HepG2 (cell line): ENCODE measurements at regions of chr9 and their contacts with region 1.

Region 1: GRCh38 chr9:75027187-75028107 is 646 bp downstream of the CARNMT1 start:
- DNase-seq: peak; percentile 30
- ATAC-seq: peak; percentile 83
- H3K4me3 ChIP-seq: peak overlapping the region; percentile 57 to 79 (median 69)
- H3K27ac ChIP-seq: peak overlapping the region; percentile 94
- H3K4me1 ChIP-seq: peaks cover 38% of the 10 kb centered on the region
- H3K27me3 ChIP-seq: no peaks in the 10 kb centered on the region; a peak in 1 of 5 replicates
- CTCF ChIP-seq: no peak
- EP300 ChIP-seq: no peak
- POLR2A ChIP-seq: no peak
- RAD21 ChIP-seq: no peak

Region 2: DNA sequence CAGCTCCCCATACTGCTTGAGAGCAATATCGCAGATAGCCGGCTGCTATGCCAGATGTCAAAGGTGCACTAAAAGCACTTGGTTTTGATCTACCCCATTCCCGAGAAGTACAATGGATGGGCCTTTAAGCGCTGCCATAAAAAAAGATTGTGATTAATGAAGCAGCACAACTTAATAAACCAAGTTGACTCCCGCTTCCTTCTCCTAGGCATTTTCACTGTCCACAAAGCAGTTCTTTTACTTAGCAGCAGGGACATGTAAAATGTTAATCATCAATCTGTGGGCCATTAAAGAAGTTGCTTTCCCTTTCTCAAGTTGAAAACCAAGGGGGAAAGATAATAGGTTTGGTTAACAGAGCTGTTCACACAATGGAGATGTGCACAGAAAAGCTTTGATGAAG is 316.1 kb before region 1 on chr9:
- CTCF ChIA-PET with region 1: no interaction called
- POLR2A ChIA-PET with region 1: no interaction called
- in situ Hi-C with region 1: no loop called
- intact Hi-C with region 1: no loop called
- DNase-seq: no peak
- ATAC-seq: no peak
- H3K4me3 ChIP-seq: no peak overlapping the region
- H3K27ac ChIP-seq: no peak overlapping the region
- H3K4me1 ChIP-seq: no peaks in the 10 kb centered on the region
- H3K27me3 ChIP-seq: no peaks in the 10 kb centered on the region
- CTCF ChIP-seq: no peak
- EP300 ChIP-seq: no peak
- POLR2A ChIP-seq: no peak
- RAD21 ChIP-seq: no peak

Region 3: DNA sequence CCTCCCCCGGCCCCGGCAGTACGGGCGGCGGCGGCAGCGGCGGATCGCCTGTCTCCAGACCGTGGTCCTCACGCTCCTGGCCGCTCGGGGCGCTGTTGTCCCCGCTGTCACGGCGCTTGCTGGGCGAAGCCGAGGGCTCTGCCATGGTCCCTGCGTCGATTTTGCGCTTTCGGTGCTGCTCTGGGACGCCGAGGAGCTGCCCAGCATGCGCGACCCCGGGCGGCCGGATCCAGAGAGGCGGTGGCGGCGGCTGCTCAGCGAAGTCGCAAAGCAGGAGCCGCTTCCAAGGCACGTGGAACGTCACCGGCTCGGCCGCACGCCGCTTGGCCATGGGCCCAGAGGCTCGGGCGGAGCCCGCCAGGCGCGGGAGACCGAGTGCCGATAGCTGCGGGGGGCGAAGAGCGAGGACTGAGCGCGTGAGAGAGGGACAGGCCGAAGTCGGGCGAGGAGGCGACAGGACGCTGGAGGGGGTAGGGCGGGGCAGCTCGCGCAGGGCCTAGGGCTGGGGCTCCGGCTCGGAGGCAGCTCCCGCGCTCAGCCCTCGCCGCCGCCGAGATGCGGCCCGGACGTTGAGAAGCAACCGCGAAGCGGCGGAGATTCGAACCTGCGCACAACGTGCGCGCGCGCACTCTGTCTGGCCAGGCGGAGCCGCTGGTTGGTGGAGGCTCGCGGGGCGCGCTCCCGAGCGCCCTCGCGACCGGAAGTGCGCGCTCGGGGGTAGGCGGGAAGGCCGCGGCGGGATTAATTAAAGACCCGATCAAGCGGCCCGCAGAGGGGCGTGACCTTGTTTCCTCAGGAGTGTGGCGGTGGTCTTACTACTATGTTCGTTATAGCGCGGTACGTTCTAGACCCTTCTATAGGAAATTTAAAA is 74.9 kb before region 1 on chr9 and contains the start of gene C9orf40:
- CTCF ChIA-PET with region 1: no interaction called
- POLR2A ChIA-PET with region 1: interaction called, 18 read pairs
- in situ Hi-C with region 1: no loop called
- intact Hi-C with region 1: loop called (anchors 5 kb)
- DNase-seq: peak; percentile 70
- ATAC-seq: peak; percentile 96
- H3K4me3 ChIP-seq: peak within 1 kb of the TSS; percentile 89 to 97 (median 89)
- H3K27ac ChIP-seq: peak within 1 kb of the TSS; percentile 99
- H3K4me1 ChIP-seq: peaks cover 33% of the 10 kb centered on the region
- H3K27me3 ChIP-seq: no peaks in the 10 kb centered on the region; a peak in 1 of 5 replicates
- CTCF ChIP-seq: peak; percentile 91
- EP300 ChIP-seq: no peak
- POLR2A ChIP-seq: peak; percentile 42 to 67; a peak in 3 of 4 replicates
- RAD21 ChIP-seq: peak; percentile 63
- total RNA-seq, gene C9orf40: 13.5 and 16.5 TPM in 2 replicates

Region 4: DNA sequence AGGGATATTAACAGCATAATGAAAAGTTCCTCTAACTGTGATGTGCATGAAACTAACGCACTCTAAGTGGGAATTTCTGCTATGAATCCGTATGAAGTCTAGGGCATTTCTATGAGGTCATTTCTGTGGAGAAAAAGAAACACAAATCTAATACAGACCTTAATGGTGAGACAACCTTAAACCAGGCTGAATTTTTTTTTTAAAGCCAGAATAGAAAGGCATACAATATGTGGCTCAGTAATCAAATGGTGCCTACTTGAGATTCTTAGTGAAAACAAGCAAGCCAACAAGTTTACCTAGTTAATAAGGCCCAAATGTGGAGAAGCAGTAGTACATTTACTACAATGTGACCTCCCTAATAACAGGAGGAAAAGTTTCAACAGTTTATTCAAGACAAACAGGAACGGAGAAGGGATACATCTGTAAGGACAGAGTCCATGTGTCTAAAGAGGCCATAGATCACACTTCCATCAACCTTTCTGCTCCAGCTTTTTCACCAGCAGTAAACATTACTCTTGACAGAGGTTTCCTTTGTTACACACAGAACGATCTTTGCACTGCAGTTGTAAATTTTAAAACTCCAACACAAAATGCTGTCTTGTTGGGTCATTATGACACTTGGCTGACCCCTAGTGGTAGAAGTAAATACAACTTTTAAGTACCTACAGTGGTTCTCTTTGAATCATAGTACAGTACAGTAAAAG is 25.6 kb before region 1 on chr9:
- CTCF ChIA-PET with region 1: no interaction called
- POLR2A ChIA-PET with region 1: interaction called, 16 read pairs
- in situ Hi-C with region 1: no loop called
- intact Hi-C with region 1: no loop called
- DNase-seq: peak; percentile 99
- ATAC-seq: peak; percentile 99
- H3K4me3 ChIP-seq: peak overlapping the region in 2 of 3 experiments; percentile 15 to 43; a peak in 3 of 6 replicates
- H3K27ac ChIP-seq: peak overlapping the region; percentile 91
- H3K4me1 ChIP-seq: peaks cover 38% of the 10 kb centered on the region
- H3K27me3 ChIP-seq: no peaks in the 10 kb centered on the region
- CTCF ChIP-seq: peak; percentile 90
- EP300 ChIP-seq: peak in 1 of 2 experiments; percentile 94; a peak in 2 of 4 replicates
- POLR2A ChIP-seq: 0 out of 4 replicates have a peak, but pooled peaks of 1 of the 2 experiments have one; percentile 46
- RAD21 ChIP-seq: peak; percentile 89

Region 5: GRCh38 chr9:75053869-75054268 is 26.4 kb after region 1 on chr9:
- CTCF ChIA-PET with region 1: no interaction called
- POLR2A ChIA-PET with region 1: interaction called, 11 read pairs
- in situ Hi-C with region 1: no loop called
- intact Hi-C with region 1: no loop called
- DNase-seq: no peak
- ATAC-seq: peak; percentile 56; the same call in 2 of the 3 replicates
- H3K4me3 ChIP-seq: no peak overlapping the region
- H3K27ac ChIP-seq: no peak overlapping the region
- H3K4me1 ChIP-seq: no peaks in the 10 kb centered on the region; the same call in 1 of the 2 replicates
- H3K27me3 ChIP-seq: no peaks in the 10 kb centered on the region
- CTCF ChIP-seq: no peak
- EP300 ChIP-seq: no peak
- POLR2A ChIP-seq: no peak
- RAD21 ChIP-seq: no peak

Region 6: DNA sequence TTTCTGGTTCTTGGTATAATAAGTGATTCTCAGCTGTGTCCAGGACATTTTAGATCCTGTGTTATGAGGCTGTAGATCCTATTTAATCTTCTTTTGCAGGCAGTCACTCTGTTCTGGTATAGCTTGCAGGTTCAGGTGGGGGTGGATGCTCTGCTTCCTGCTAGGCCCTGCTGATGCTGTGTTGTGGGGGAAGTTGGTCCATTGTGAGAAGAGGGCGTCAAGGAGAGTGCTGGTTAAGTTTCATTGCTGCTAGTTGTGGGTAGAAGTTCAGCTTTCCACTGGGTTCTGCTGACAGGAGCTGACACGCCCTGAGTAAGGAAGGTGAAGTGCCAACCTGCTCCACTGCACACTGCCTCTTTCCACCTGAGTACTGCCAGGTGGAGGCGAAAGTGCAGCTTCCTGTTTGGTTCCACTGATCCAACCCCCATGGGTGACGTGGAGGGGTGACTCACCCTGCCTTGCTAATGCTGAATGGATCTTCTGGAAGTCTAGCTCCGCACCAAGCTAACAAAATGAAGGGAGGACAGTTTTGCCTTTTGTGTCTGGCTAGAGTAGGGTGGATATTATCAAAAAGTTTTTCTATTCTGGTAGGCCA is 44.2 kb after region 1 on chr9:
- CTCF ChIA-PET with region 1: no interaction called
- POLR2A ChIA-PET with region 1: no interaction called
- in situ Hi-C with region 1: loop called (anchors 5 kb)
- intact Hi-C with region 1: loop called (anchors 2 kb)
- DNase-seq: no peak
- ATAC-seq: no peak
- H3K4me3 ChIP-seq: no peak overlapping the region
- H3K27ac ChIP-seq: no peak overlapping the region
- H3K4me1 ChIP-seq: no peaks in the 10 kb centered on the region
- H3K27me3 ChIP-seq: no peaks in the 10 kb centered on the region
- CTCF ChIP-seq: no peak
- EP300 ChIP-seq: no peak
- POLR2A ChIP-seq: no peak
- RAD21 ChIP-seq: no peak

Region 7: GRCh38 chr9:75088260-75088905 is 60.9 kb after region 1 on chr9 and contains the start of gene OSTF1:
- CTCF ChIA-PET with region 1: no interaction called
- POLR2A ChIA-PET with region 1: interaction called, 18 read pairs
- in situ Hi-C with region 1: no loop called
- intact Hi-C with region 1: loop called (anchors 2 kb)
- DNase-seq: peak; percentile 86
- ATAC-seq: peak; percentile 86
- H3K4me3 ChIP-seq: peak within 1 kb of the TSS; percentile 85 to 98 (median 91)
- H3K27ac ChIP-seq: peak within 1 kb of the TSS; percentile 98
- H3K4me1 ChIP-seq: peaks cover 78% of the 10 kb centered on the region
- H3K27me3 ChIP-seq: no peaks in the 10 kb centered on the region; a peak in 1 of 5 replicates
- CTCF ChIP-seq: no peak
- EP300 ChIP-seq: no peak
- POLR2A ChIP-seq: peak; percentile 43 to 44; a peak in 2 of 4 replicates
- RAD21 ChIP-seq: peak; percentile 17; the same call in 1 of the 2 replicates
- total RNA-seq, gene OSTF1: 39.0 and 54.5 TPM in 2 replicates